ENCODE measurements at regions of chr15 and their contacts with region 1.

Region 1: GRCh38 chr15:55434989-55435825 is 26.9 kb downstream of the PIERCE2 start:
- H3K4me3 ChIP-seq: no peak overlapping the region
- H3K27ac ChIP-seq: no peak overlapping the region
- H3K4me1 ChIP-seq: no peaks in the 10 kb centered on the region
- CTCF ChIP-seq: 0 out of 2 replicates have a peak, but pooled peaks have one; percentile 9

Region 2: DNA sequence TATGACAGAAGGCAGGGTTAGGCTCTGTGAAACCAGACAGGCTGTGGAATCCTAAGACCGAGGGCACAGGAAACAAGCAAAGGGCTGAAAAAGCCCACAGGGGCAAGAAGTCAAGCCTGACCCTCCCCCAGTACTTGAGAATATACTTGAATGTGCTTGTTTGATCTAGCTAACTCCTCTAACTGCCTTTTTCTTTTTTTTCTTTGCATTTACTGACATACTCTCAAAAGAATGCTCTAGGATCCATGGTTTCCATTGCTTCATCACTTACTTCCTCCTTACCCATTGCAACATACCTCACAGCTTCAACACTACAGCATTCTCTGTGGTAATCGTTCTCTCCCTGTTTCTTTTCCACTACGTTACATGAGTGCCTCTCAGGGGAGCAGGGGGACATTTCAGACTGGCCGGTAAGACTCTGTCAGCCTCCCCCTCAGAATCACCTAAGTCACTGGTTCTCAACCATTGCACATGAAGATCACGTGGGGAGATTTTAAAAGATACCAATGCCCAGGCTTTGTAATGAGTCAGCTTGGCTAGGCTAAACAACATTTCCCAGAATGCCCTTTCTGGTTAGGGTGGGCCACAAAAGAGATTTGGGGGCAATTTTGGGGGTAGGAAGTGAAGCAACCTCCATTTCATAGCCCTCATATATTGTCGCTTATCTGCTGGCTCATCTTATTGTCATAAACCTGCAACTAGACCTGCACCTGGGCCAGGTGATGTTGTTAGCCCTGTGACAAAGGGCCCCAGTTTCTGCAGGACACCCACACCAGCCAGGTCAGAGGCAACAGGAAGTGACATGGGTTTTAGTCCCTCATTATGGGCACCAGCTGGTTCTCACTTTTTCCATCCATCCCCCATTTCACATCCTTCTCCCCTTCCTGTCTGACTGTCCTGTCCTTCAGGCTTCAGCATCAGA is 213.9 kb before region 1 on chr15:
- CTCF ChIA-PET with region 1: interaction called, 40 read pairs
- POLR2A ChIA-PET with region 1: no interaction called
- H3K4me3 ChIP-seq: no peak overlapping the region
- H3K27ac ChIP-seq: no peak overlapping the region
- H3K4me1 ChIP-seq: no peaks in the 10 kb centered on the region
- CTCF ChIP-seq: no peak